Activated CD4-positive, alpha-beta T cell treated with anti-CD3 and anti-CD28 coated beads for 36 hours (primary cell): ENCODE measurements at regions of chr3 and their contacts with region 1.

Region 1: DNA sequence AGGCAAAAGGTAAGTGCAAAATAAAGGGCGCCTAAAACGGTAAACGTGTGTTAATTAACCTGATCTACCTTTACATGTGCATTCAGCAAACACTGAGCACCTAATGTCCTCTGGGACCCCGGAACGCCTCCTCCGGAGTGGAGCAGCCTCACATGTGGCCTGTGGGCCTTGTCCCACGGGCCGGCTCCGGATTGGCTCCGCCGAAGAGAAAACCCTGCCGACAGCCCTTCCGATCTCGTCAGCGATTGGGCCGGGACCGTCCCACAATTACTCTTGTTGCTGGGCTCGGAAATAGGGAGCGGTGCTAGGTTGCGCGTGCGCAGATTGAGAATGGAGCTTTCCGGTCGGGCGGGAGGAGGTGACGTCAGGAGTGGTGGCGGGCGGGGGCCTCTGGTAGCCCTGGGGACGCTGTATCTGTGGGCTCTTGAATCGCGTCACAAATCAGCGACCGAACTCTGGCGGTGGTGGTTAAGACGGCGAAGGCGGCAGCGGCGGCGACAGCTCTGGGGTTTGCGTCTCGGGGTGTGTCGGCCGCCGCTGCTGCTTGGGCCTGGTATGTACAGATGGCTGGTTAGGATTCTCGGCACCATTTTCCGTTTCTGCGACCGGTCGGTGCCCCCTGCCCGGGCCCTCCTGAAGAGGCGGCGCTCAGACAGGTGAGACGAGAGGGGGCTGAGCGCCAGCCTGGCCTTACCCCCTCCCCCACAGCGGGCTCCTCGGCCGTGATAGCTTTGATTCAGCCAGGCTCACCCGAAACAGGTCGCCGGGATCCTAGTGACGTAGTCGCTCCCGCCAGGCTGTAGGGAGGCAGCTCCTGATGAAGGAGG is at the start of gene SENP2:
- DNase-seq: peak; percentile 100
- ATAC-seq: peak; percentile 98
- H3K4me3 Mint-ChIP-seq: peak within 1 kb of the TSS; percentile 87
- H3K27ac Mint-ChIP-seq: peak within 1 kb of the TSS; percentile 93
- H3K4me1 Mint-ChIP-seq: peaks cover 26% of the 10 kb centered on the region
- H3K27me3 Mint-ChIP-seq: no peaks in the 10 kb centered on the region
- total RNA-seq, gene SENP2: 23.2 to 24.6 TPM

Region 2: DNA sequence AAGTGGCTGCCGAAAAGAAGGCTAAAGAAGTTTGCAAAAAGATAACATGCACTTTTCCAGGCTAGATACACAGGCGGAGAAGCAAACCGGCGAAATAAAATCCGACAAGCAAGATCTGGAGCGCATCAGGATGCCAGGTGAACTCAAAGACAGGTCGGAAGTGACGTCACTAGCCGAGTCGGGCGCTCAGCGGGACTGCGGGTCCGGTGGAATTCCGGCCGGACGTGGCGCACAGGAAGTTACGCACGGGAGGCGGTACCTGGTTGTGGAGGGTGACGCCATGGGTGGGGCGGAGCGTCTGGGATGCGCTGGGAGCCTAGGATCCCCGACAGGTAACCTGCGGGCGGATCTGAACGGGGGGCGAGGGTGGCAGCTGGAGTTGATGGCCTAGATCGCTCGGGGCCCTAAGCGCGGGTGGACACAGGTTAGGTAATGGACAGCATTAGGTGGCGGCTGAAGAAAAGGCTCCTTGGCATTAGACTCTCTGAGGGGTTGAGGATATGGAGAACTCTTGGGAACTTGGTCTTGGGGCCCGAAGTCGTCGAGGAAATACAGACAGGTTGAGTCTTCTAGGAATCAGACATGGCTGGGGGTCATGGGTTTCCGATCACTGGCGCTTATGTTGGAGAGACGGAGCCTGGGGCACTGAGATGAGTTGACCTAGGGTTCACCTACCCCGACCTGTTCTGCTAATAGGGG is 303.2 kb before region 1 on chr3:
- CTCF ChIA-PET with region 1: no interaction called
- POLR2A ChIA-PET with region 1: no interaction called
- intact Hi-C with region 1: loop called in 1 of 2 experiments (anchors 1 kb)
- DNase-seq: peak; percentile 98
- ATAC-seq: peak; percentile 100
- H3K4me3 Mint-ChIP-seq: peak overlapping the region; percentile 97
- H3K27ac Mint-ChIP-seq: peak overlapping the region; percentile 92
- H3K4me1 Mint-ChIP-seq: peaks cover 19% of the 10 kb centered on the region
- H3K27me3 Mint-ChIP-seq: peaks cover 7% of the 10 kb centered on the region

Region 3: GRCh38 chr3:185498503-185499396 is 87.3 kb before region 1 on chr3 and contains the start of gene TMEM41A:
- CTCF ChIA-PET with region 1: no interaction called
- POLR2A ChIA-PET with region 1: interaction called, 3 read pairs
- intact Hi-C with region 1: loop called (anchors 1 kb)
- DNase-seq: peak; percentile 96
- ATAC-seq: peak; percentile 99
- H3K4me3 Mint-ChIP-seq: peak within 1 kb of the TSS; percentile 98
- H3K27ac Mint-ChIP-seq: peak within 1 kb of the TSS; percentile 91
- H3K4me1 Mint-ChIP-seq: peaks cover 18% of the 10 kb centered on the region
- H3K27me3 Mint-ChIP-seq: no peaks in the 10 kb centered on the region
- total RNA-seq, gene TMEM41A: 19.6 to 21.6 TPM

Region 4: DNA sequence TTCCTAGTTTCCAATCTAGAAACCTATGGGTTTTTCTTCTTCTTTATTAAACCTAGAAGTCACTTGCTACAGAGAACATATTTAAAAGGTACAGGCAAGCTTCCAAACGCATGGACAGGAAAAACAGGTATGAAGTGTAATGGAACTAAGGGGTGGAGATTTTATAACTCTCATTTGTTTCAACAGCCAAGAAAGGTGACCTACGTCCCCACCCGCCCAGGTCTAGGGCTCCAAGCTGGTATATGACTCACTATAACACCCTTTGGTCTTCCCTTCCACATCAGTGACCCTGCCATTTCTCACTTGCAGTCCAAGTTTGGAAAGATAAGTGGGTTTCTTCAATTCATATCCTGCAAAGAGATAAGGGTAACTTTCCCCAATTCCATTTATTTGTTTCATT is 27.7 kb before region 1 on chr3:
- CTCF ChIA-PET with region 1: interaction called, 14 read pairs
- POLR2A ChIA-PET with region 1: interaction called, 3 read pairs
- intact Hi-C with region 1: loop called in 1 of 2 experiments (anchors 1 kb)
- DNase-seq: no peak
- ATAC-seq: no peak
- H3K4me3 Mint-ChIP-seq: no peak overlapping the region
- H3K27ac Mint-ChIP-seq: no peak overlapping the region
- H3K4me1 Mint-ChIP-seq: peaks cover 14% of the 10 kb centered on the region
- H3K27me3 Mint-ChIP-seq: peaks cover 2% of the 10 kb centered on the region

Region 5: DNA sequence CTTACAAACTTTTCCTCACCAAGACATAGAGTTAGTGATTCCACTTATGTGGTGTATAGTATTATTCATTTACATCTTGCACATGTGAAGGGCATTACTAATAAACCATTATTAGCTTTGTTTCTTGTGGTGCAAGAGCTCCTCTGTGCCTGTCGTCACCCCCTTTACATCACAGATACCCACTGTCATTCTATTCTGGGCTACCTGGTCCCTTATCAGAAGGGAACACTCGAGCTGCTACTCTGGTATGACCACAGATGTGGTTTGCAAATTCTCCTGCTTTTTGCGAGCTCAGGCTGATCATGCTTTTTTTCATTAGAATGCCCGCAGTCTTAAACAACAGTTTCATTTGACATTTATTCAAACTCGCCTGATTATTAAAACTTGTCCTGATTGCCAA is 13.9 kb before region 1 on chr3:
- CTCF ChIA-PET with region 1: interaction called, 14 read pairs
- POLR2A ChIA-PET with region 1: no interaction called
- intact Hi-C with region 1: no loop called
- DNase-seq: no peak
- ATAC-seq: no peak
- H3K4me3 Mint-ChIP-seq: no peak overlapping the region
- H3K27ac Mint-ChIP-seq: no peak overlapping the region
- H3K4me1 Mint-ChIP-seq: peaks cover 6% of the 10 kb centered on the region
- H3K27me3 Mint-ChIP-seq: no peaks in the 10 kb centered on the region

Region 6: GRCh38 chr3:185733980-185734724 is 148.1 kb after region 1 on chr3:
- CTCF ChIA-PET with region 1: no interaction called
- POLR2A ChIA-PET with region 1: no interaction called
- intact Hi-C with region 1: no loop called
- DNase-seq: peak; percentile 37
- ATAC-seq: no peak
- H3K4me3 Mint-ChIP-seq: no peak overlapping the region
- H3K27ac Mint-ChIP-seq: no peak overlapping the region
- H3K4me1 Mint-ChIP-seq: no peaks in the 10 kb centered on the region
- H3K27me3 Mint-ChIP-seq: peaks cover 10% of the 10 kb centered on the region

Region 7: GRCh38 chr3:186570096-186570940 is 984.2 kb after region 1 on chr3 and contains the start of gene DNAJB11:
- CTCF ChIA-PET with region 1: no interaction called
- POLR2A ChIA-PET with region 1: no interaction called
- intact Hi-C with region 1: loop called in 1 of 2 experiments (anchors 1 kb)
- DNase-seq: peak; percentile 100
- ATAC-seq: peak; percentile 92
- H3K4me3 Mint-ChIP-seq: peak within 1 kb of the TSS; percentile 93
- H3K27ac Mint-ChIP-seq: peak within 1 kb of the TSS; percentile 95
- H3K4me1 Mint-ChIP-seq: peaks cover 50% of the 10 kb centered on the region
- H3K27me3 Mint-ChIP-seq: no peaks in the 10 kb centered on the region
- total RNA-seq, gene DNAJB11: 30.9 to 36.6 TPM

Region 8: GRCh38 chr3:186783073-186783730 is 1197.1 kb after region 1 on chr3 and contains the start of gene EIF4A2:
- CTCF ChIA-PET with region 1: no interaction called
- POLR2A ChIA-PET with region 1: no interaction called
- intact Hi-C with region 1: loop called in 1 of 2 experiments (anchors 2 kb)
- DNase-seq: peak; percentile 95
- ATAC-seq: peak; percentile 69
- H3K4me3 Mint-ChIP-seq: peak within 1 kb of the TSS; percentile 100
- H3K27ac Mint-ChIP-seq: peak within 1 kb of the TSS; percentile 100
- H3K4me1 Mint-ChIP-seq: peaks cover 32% of the 10 kb centered on the region
- H3K27me3 Mint-ChIP-seq: no peaks in the 10 kb centered on the region
- total RNA-seq, gene EIF4A2: 291 to 390 TPM